ENCODE measurements at regions of chr10 and their contacts with region 1.

Region 1: GRCh38 chr10:28532383-28533175 is at the start of gene WAC:
- DNase-seq: peak; percentile 95
- H3K4me3 Mint-ChIP-seq: peak within 1 kb of the TSS; percentile 99
- H3K27ac Mint-ChIP-seq: peak within 1 kb of the TSS; percentile 100
- H3K4me1 Mint-ChIP-seq: peaks cover 42% of the 10 kb centered on the region
- H3K27me3 Mint-ChIP-seq: no peaks in the 10 kb centered on the region
- total RNA-seq, gene WAC: 126 and 130 TPM in 2 replicates

Region 2: DNA sequence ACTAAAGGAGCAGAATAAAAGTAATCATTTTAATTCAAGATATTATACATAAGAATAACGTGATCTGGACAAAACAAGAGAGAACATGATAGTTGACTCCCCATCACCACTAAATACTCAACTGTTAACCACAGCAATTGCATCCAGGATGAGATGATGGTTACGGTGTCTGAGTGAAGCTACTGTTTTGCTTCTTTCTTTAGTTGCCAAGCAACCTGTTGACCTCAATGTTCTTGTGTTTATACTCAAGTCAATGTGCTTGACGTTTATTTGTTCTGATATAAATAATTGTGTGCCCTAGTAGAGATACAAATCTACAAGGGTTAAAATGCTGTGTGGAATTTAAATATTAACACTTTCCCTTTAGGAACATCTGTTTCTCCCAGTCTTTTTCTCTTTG is 198.3 kb before region 1 on chr10:
- intact Hi-C with region 1: loop called (anchors 1 kb)
- DNase-seq: peak; percentile 58
- H3K4me3 Mint-ChIP-seq: peak overlapping the region; percentile 79
- H3K27ac Mint-ChIP-seq: peak overlapping the region; percentile 98
- H3K4me1 Mint-ChIP-seq: peaks cover 49% of the 10 kb centered on the region
- H3K27me3 Mint-ChIP-seq: peaks cover 2% of the 10 kb centered on the region

Region 3: GRCh38 chr10:28432210-28432676 is 100.3 kb before region 1 on chr10:
- intact Hi-C with region 1: loop called (anchors 10 kb)
- DNase-seq: no peak
- H3K4me3 Mint-ChIP-seq: no peak overlapping the region
- H3K27ac Mint-ChIP-seq: no peak overlapping the region
- H3K4me1 Mint-ChIP-seq: peaks cover 8% of the 10 kb centered on the region
- H3K27me3 Mint-ChIP-seq: peaks cover 5% of the 10 kb centered on the region

Region 4: GRCh38 chr10:28581916-28582315 is 49.3 kb after region 1 on chr10:
- intact Hi-C with region 1: loop called (anchors 5 kb)
- DNase-seq: no peak
- H3K4me3 Mint-ChIP-seq: no peak overlapping the region
- H3K27ac Mint-ChIP-seq: peak overlapping the region; percentile 81
- H3K4me1 Mint-ChIP-seq: peaks cover 55% of the 10 kb centered on the region
- H3K27me3 Mint-ChIP-seq: no peaks in the 10 kb centered on the region